Heart left ventricle (tissue), 16 donors: ENCODE measurements at regions of chr6 and their contacts with region 1.

Region 1: DNA sequence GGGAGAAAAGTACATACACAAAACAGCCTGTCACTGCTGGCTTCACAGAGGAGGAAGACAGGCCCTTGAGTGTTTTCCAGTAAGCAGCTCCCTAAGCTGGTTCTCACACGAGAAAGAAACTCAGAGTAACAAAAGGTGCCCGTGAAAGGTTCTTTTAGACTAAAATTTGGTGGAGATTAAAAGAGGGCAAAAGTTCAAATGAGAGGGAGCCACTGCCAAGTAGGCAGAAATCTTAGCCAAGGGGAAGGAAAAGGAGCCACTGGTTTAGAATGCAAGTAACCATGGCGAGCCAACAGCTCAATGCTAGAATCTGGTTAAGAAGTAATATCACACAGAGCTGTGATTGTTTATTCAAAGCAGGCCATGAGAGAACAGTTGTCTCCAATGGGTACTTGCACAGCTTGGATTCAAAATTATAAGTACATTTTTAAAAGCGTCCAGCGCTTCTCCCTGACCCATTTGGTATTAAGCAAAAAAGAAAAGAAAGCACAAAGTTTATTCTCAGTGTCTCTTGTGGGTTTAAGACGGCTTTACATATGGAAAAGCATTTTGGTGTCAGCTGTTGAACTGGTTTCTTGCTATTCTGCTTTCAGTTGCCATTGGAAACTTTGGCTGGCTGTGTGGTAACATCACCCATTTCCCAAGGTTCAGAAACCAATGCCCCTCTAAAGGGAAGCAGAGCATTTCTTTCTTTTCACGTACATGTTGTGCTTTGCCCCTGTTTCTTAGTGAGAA is 648.5 kb downstream of the RNF144B start:
- DNase-seq: no peak
- ATAC-seq: peak in 1 of 4 donors; percentile 39
- H3K4me3 ChIP-seq: no peak overlapping the region
- H3K27ac ChIP-seq: peak overlapping the region in 3 of 12 donors; percentile 18 to 43 (median 31)
- H3K4me1 ChIP-seq: peaks cover 0 to 42% (median 17%) of the 10 kb centered on the region in 12 donors
- H3K27me3 ChIP-seq: no peaks in the 10 kb centered on the region
- CTCF ChIP-seq: no peak
- POLR2A ChIP-seq: no peak

Region 2: GRCh38 chr6:18990059-18990978 is 45.3 kb before region 1 on chr6:
- intact Hi-C with region 1: no loop called
- DNase-seq: peak; percentile 64 to 80 (median 74)
- ATAC-seq: peak in 3 of 4 donors; percentile 62 to 75 (median 74)
- H3K4me3 ChIP-seq: peak overlapping the region in 3 of 12 donors; percentile 8 to 11 (median 11)
- H3K27ac ChIP-seq: no peak overlapping the region
- H3K4me1 ChIP-seq: peaks cover 0 to 7% (median 0%) of the 10 kb centered on the region in 12 donors
- H3K27me3 ChIP-seq: no peaks in the 10 kb centered on the region
- CTCF ChIP-seq: peak; percentile 42 to 75 (median 58)
- POLR2A ChIP-seq: no peak

Region 3: DNA sequence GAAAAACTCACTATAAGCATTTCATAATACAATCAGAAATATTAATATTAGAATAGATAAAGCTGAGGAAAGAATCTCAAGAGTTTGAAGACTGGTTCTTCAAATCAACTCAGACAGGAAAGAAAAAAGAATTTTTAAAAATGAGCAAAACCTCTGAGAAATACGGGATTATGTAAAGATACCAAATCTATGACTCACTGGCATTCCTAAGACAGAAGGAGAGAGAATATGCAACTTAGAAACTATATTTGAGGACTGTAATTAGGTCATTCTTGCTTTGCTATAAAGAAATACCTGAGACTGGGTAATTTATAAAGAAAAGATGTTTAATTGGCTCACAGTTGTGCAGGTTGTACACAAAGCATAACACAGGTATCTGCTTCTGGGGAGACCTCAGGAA is 16.6 kb after region 1 on chr6:
- intact Hi-C with region 1: loop called in 2 of 10 experiments (anchors 1 kb)
- DNase-seq: no peak
- ATAC-seq: no peak
- H3K4me3 ChIP-seq: no peak overlapping the region
- H3K27ac ChIP-seq: no peak overlapping the region
- H3K4me1 ChIP-seq: no peaks in the 10 kb centered on the region
- H3K27me3 ChIP-seq: no peaks in the 10 kb centered on the region
- CTCF ChIP-seq: no peak
- POLR2A ChIP-seq: no peak

Region 4: DNA sequence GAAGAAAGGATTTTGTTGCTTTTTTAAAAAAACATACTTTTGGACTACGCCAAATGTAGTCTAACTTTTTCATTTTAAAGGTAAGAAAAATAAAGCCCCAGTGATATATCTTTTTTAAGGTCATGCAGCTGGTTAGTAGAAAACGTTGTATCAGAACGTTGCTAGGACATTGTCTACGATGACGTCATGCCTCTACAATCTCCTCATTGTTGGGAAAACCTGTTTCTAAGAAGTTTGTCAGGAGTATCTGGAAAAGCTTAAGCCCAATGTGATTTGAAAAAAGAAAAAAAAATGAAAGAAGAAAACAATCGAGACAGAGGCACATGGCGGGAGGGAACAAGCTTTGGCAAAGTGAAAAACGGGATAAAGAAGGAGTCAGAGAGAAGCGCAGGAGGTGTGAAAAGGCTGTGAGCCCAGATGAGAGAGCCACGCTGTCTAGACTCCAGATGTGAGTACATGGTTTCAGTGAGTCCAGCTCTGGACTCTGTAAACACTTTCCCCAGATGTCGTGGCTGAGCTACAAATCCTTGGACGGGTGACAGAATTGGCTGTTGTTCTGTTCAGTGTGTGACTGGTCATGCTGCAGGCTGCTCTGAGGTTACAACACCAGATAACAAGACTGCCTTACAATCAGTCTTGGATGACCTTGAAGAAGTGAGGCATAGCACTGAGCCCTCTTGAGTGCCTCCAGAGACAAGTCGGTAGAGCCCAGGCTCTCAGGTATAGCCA is 144.9 kb after region 1 on chr6:
- intact Hi-C with region 1: loop called in 2 of 10 experiments (anchors 10 kb)
- DNase-seq: peak; percentile 55 to 82 (median 78)
- ATAC-seq: peak; percentile 96 to 99 (median 98)
- H3K4me3 ChIP-seq: no peak overlapping the region
- H3K27ac ChIP-seq: peak overlapping the region in 9 of 12 donors; percentile 11 to 66 (median 48)
- H3K4me1 ChIP-seq: peaks cover 0 to 16% (median 2%) of the 10 kb centered on the region in 12 donors
- H3K27me3 ChIP-seq: no peaks in the 10 kb centered on the region
- CTCF ChIP-seq: no peak
- POLR2A ChIP-seq: no peak